Activated CD4-positive, alpha-beta T cell treated with anti-CD3 and anti-CD28 coated beads, Interleukin-2, amount 10 ng/mL, durations not matched to agents 7 days and 5 days (primary cell): ENCODE measurements at regions of chr22 and their contacts with region 1.

Region 1: GRCh38 chr22:43993027-43993760 is 30.9 kb upstream of the PARVB start:
- DNase-seq: peak; percentile 64
- H3K4me3 Mint-ChIP-seq: no peak overlapping the region
- H3K27ac Mint-ChIP-seq: peak overlapping the region; percentile 71
- H3K4me1 Mint-ChIP-seq: peaks cover 29% of the 10 kb centered on the region
- H3K27me3 Mint-ChIP-seq: no peaks in the 10 kb centered on the region

Region 2: DNA sequence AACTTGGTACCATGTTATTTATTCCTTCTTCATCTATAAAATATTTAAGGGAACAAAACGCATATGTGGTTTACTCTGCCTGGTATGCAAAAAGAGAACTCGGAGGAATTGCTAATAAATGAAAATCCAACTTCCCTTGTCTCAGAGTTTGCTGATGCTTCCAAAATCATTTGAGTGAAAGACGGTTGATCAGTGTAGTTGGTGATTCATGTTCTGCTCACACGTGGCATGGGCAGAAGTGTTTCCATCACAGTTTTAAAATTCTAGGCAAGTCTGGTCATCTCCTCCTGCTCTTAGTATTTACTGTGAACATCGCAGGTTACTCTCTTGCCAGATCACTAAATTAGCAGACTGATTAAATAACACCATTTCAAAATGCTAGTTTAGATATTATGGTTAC is 19.0 kb after region 1 on chr22:
- CTCF ChIA-PET with region 1: interaction called, 3 read pairs
- POLR2A ChIA-PET with region 1: interaction called, 11 read pairs
- DNase-seq: no peak
- H3K4me3 Mint-ChIP-seq: no peak overlapping the region
- H3K27ac Mint-ChIP-seq: no peak overlapping the region
- H3K4me1 Mint-ChIP-seq: no peaks in the 10 kb centered on the region
- H3K27me3 Mint-ChIP-seq: no peaks in the 10 kb centered on the region

Region 3: DNA sequence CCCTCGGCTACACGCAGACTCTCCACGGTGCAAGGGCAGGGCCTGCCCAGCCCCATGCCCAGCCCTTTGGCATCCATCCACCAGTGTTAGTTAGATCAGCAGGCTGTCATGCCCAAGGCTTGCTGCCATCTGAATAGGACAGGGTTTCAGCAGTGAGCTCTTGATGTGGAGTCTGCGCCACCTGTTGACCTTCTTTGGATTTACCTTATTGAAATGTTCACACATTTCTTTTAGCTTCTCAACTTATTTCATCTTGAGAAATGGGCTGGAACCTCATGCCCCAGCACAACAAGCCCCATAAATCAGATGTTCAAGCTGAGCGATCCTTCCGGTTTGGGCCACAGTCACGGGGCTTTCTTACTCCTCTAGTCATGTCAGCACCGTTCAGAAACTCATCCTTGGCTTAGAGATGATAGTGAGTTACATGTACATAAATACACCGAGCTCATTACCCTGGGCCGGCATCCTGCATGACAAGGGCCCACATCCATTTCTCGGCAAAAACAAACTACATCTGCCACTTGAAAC is 92.6 kb after region 1 on chr22:
- CTCF ChIA-PET with region 1: interaction called, 32 read pairs
- POLR2A ChIA-PET with region 1: no interaction called
- DNase-seq: peak; percentile 47
- H3K4me3 Mint-ChIP-seq: no peak overlapping the region
- H3K27ac Mint-ChIP-seq: no peak overlapping the region
- H3K4me1 Mint-ChIP-seq: peaks cover under 1% of the 10 kb centered on the region
- H3K27me3 Mint-ChIP-seq: no peaks in the 10 kb centered on the region

Region 4: DNA sequence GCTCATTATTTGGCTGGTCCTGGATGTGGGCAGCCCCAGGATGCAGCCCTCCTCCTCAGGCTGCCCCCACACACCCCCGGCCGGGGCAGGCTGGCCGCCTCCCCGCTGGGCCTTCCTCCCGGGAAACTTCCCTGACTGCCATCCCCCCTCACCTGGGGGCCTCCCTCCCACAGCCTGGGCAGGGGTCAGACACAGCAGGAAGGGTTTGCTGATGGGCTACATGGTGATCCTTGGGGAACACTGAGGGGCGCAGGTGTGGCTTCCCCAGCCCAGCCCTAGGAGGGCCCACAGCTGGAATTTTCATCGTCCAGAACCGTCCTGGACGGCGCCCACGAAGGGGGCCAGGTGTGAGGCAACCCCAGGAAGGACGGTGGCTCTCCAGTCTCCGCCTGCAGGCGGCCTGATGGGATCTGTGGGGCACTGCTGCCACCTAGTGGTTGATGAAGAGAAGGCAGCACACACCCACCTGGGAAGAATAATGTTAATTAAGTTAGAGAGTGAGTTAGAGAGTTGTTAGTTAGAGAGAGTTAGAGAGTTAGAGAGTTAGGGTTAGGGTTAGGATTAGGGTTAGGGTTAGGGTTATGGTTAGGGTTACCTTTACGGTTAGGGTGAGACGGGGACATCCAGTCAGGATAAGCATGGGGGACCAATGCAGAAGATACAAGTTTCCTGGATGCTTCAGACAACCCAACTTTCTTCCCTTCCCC is 632.9 kb after region 1 on chr22:
- CTCF ChIA-PET with region 1: interaction called, 16 read pairs
- POLR2A ChIA-PET with region 1: no interaction called
- DNase-seq: peak; percentile 82
- H3K4me3 Mint-ChIP-seq: no peak overlapping the region
- H3K27ac Mint-ChIP-seq: peak overlapping the region; percentile 6
- H3K4me1 Mint-ChIP-seq: peaks cover 9% of the 10 kb centered on the region
- H3K27me3 Mint-ChIP-seq: peaks cover 4% of the 10 kb centered on the region